GM13977 (cell line): ENCODE measurements at regions of chr1 and their contacts with region 1.

Region 1: GRCh38 chr1:181479137-181479745 is 4.1 kb upstream of the CACNA1E start:
- DNase-seq: peak; percentile 76
- CTCF ChIP-seq: peak; percentile 94

Region 2: DNA sequence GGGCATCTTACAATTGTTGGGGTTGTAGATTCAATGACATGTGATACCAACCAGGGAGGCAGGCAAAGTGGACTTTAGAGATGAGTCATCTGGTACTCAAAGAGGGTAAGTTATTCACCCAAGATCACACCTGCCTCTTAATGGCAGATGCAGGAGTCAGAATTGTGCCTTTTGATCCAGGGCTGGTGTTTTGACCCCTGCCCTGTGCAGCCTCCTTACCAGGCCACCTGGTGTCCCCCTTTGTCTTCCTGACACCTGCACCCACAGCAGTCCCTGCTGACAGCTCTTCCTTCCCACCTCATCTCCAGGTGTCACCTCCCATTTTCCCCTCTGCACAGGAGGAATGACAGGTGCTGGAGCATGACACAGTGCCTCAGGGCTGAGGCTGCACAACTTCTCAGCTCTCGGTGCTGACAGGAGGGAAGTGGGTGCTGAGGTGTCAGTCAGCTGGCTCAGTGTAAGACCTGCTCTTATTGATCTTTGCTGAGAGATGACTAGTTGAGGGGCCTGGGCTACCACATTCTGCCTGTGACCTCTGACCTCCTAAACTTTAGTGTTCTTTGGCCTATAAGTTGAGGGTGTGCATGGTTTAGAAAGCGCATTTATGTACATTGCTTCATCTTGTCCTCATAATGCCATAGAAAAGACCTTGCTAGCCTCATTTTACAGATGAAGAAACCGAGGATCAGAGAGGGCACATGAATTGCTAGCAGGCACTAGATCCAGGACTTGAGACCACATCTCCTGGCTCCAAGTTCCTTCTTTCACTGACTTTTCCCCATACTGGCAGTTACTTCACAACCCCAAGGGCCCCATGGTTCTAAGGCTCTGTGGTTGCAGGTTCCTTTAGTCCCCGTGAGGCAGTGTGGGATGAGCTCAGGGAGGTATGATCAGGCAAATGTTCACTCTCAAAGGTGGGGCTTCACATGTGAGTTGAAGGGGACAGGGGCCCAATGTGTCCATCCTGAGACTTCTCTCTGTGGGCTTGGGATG is 35.4 kb after region 1 on chr1:
- in situ Hi-C with region 1: no loop called
- DNase-seq: no peak
- CTCF ChIP-seq: peak; percentile 39

Region 3: DNA sequence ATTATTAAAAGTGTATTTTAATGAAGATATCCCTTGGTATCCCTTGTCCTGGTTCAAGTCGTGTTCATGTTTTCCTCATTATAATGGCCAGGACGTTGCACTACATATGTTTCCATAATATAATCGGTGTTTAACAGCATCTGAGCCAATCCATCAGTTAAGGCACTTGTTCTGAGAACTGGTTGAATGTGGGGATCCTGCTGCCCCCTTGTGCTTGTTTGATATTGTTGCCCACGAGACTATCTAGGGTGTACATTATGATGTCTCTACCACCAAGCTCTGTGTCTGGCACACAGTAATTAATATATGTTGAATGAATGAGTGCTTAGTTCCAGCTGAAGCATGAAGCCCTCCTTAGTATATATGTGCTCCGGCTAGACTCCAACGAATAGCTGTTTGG is 197.0 kb after region 1 on chr1:
- in situ Hi-C with region 1: loop called (anchors 10 kb)
- DNase-seq: peak; percentile 71
- CTCF ChIP-seq: peak; percentile 59

Region 4: GRCh38 chr1:181936768-181937581 is 457.7 kb after region 1 on chr1:
- in situ Hi-C with region 1: loop called (anchors 10 kb)
- DNase-seq: peak; percentile 73
- CTCF ChIP-seq: peak; percentile 92

Region 5: GRCh38 chr1:182029379-182030331 is 550.4 kb after region 1 on chr1:
- in situ Hi-C with region 1: loop called (anchors 25 kb)
- DNase-seq: peak; percentile 93
- CTCF ChIP-seq: peak; percentile 48